ENCODE measurements at regions of chr3 and their contacts with region 1.

Region 1: GRCh38 chr3:53072653-53073552 is 27.0 kb upstream of the SFMBT1 start:
- DNase-seq: peak; percentile 60 to 69
- ATAC-seq: peak; percentile 90 to 96
- H3K4me3 ChIP-seq: peak overlapping the region; percentile 49
- H3K27ac ChIP-seq: peak overlapping the region; percentile 70 to 79
- H3K4me1 ChIP-seq: no peaks in the 10 kb centered on the region
- CTCF ChIP-seq: peak; percentile 73
- EP300 ChIP-seq: no peak
- POLR2A ChIP-seq: no peak
- RAD21 ChIP-seq: peak; percentile 80 to 81

Region 2: GRCh38 chr3:52851348-52851747 is 221.6 kb before region 1 on chr3:
- CTCF ChIA-PET with region 1: interaction called, 31 read pairs
- POLR2A ChIA-PET with region 1: no interaction called
- DNase-seq: peak; percentile 52 to 62
- ATAC-seq: peak; percentile 88 to 95
- H3K4me3 ChIP-seq: no peak overlapping the region
- H3K27ac ChIP-seq: no peak overlapping the region
- H3K4me1 ChIP-seq: no peaks in the 10 kb centered on the region
- CTCF ChIP-seq: peak; percentile 50
- EP300 ChIP-seq: no peak
- POLR2A ChIP-seq: no peak
- RAD21 ChIP-seq: peak; percentile 70 to 82

Region 3: GRCh38 chr3:53083521-53083920 is 10.6 kb after region 1 on chr3:
- CTCF ChIA-PET with region 1: interaction called, 11 read pairs
- POLR2A ChIA-PET with region 1: no interaction called
- DNase-seq: no peak
- ATAC-seq: no peak
- H3K4me3 ChIP-seq: no peak overlapping the region
- H3K27ac ChIP-seq: no peak overlapping the region
- H3K4me1 ChIP-seq: no peaks in the 10 kb centered on the region
- CTCF ChIP-seq: no peak
- EP300 ChIP-seq: no peak
- POLR2A ChIP-seq: no peak
- RAD21 ChIP-seq: no peak

Measured in A549 (cell line).